ENCODE measurements at regions of chr17 and their contacts with region 1.

Region 1: GRCh38 chr17:10482252-10482651 is 12.9 kb upstream of the MYH4 start:
- DNase-seq: no peak
- ATAC-seq: no peak
- H3K4me3 ChIP-seq: no peak overlapping the region
- H3K4me3 Mint-ChIP-seq: no peak overlapping the region
- H3K27ac ChIP-seq: no peak overlapping the region
- H3K27ac Mint-ChIP-seq: no peak overlapping the region
- H3K4me1 ChIP-seq: no peaks in the 10 kb centered on the region
- H3K4me1 Mint-ChIP-seq: no peaks in the 10 kb centered on the region
- H3K27me3 ChIP-seq: no peaks in the 10 kb centered on the region
- H3K27me3 Mint-ChIP-seq: no peaks in the 10 kb centered on the region
- CTCF ChIP-seq: no peak

Region 2: GRCh38 chr17:10018461-10018891 is 463.8 kb before region 1 on chr17:
- CTCF ChIA-PET with region 1: no interaction called
- POLR2A ChIA-PET with region 1: no interaction called
- intact Hi-C with region 1: loop called in 1 of 2 experiments (anchors 5 kb)
- DNase-seq: peak in 1 of 9 experiments; percentile 25
- ATAC-seq: no peak
- H3K4me3 ChIP-seq: no peak overlapping the region
- H3K4me3 Mint-ChIP-seq: no peak overlapping the region
- H3K27ac ChIP-seq: no peak overlapping the region
- H3K27ac Mint-ChIP-seq: no peak overlapping the region
- H3K4me1 ChIP-seq: no peaks in the 10 kb centered on the region
- H3K4me1 Mint-ChIP-seq: peaks cover 3% of the 10 kb centered on the region
- H3K27me3 ChIP-seq: no peaks in the 10 kb centered on the region
- H3K27me3 Mint-ChIP-seq: no peaks in the 10 kb centered on the region
- CTCF ChIP-seq: no peak

Region 3: DNA sequence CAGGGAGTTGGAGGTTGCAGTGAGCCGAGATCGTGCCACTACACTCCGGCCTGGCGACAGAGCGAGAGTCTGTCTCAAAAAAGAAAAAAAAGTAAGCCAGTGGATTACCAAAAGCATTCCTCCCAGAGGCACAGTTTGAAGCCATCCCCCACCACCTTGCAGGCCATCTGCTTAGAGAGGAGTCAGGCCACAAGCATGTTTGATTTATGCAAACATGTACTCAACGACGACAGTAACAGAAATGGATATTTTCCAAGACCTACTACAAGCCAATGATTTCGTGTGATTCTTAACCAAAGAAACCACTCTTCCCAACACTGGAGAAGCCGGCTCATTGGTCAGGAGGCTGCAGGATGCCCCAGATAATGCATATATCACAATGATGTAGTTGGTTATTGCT is 144.3 kb before region 1 on chr17:
- CTCF ChIA-PET with region 1: no interaction called
- POLR2A ChIA-PET with region 1: no interaction called
- intact Hi-C with region 1: no loop called
- DNase-seq: no peak
- ATAC-seq: no peak
- H3K4me3 ChIP-seq: no peak overlapping the region
- H3K4me3 Mint-ChIP-seq: no peak overlapping the region
- H3K27ac ChIP-seq: no peak overlapping the region
- H3K27ac Mint-ChIP-seq: no peak overlapping the region
- H3K4me1 ChIP-seq: no peaks in the 10 kb centered on the region
- H3K4me1 Mint-ChIP-seq: no peaks in the 10 kb centered on the region
- H3K27me3 ChIP-seq: no peaks in the 10 kb centered on the region
- H3K27me3 Mint-ChIP-seq: peaks cover 8% of the 10 kb centered on the region
- CTCF ChIP-seq: no peak

Region 4: GRCh38 chr17:10447026-10447931 is 35.0 kb before region 1 on chr17:
- CTCF ChIA-PET with region 1: no interaction called
- POLR2A ChIA-PET with region 1: no interaction called
- intact Hi-C with region 1: no loop called
- DNase-seq: no peak
- ATAC-seq: no peak
- H3K4me3 ChIP-seq: no peak overlapping the region
- H3K4me3 Mint-ChIP-seq: no peak overlapping the region
- H3K27ac ChIP-seq: no peak overlapping the region
- H3K27ac Mint-ChIP-seq: no peak overlapping the region
- H3K4me1 ChIP-seq: no peaks in the 10 kb centered on the region
- H3K4me1 Mint-ChIP-seq: no peaks in the 10 kb centered on the region
- H3K27me3 ChIP-seq: no peaks in the 10 kb centered on the region
- H3K27me3 Mint-ChIP-seq: peaks cover 16% of the 10 kb centered on the region
- CTCF ChIP-seq: no peak